Upper lobe of right lung (tissue), 1 donor: ENCODE measurements at regions of chr3 and their contacts with region 1.

Region 1: GRCh38 chr3:4629095-4630007 is 136.2 kb downstream of the ITPR1 start:
- DNase-seq: no peak
- ATAC-seq: no peak
- H3K4me3 ChIP-seq: no peak overlapping the region
- H3K27ac ChIP-seq: no peak overlapping the region
- H3K4me1 ChIP-seq: no peaks in the 10 kb centered on the region
- H3K27me3 ChIP-seq: no peaks in the 10 kb centered on the region
- CTCF ChIP-seq: no peak

Region 2: GRCh38 chr3:4355401-4356219 is 273.7 kb before region 1 on chr3:
- intact Hi-C with region 1: loop called (anchors 5 kb)
- DNase-seq: no peak
- ATAC-seq: no peak
- H3K4me3 ChIP-seq: no peak overlapping the region
- H3K27ac ChIP-seq: no peak overlapping the region
- H3K4me1 ChIP-seq: peaks cover 15% of the 10 kb centered on the region
- H3K27me3 ChIP-seq: no peaks in the 10 kb centered on the region
- CTCF ChIP-seq: no peak

Region 3: DNA sequence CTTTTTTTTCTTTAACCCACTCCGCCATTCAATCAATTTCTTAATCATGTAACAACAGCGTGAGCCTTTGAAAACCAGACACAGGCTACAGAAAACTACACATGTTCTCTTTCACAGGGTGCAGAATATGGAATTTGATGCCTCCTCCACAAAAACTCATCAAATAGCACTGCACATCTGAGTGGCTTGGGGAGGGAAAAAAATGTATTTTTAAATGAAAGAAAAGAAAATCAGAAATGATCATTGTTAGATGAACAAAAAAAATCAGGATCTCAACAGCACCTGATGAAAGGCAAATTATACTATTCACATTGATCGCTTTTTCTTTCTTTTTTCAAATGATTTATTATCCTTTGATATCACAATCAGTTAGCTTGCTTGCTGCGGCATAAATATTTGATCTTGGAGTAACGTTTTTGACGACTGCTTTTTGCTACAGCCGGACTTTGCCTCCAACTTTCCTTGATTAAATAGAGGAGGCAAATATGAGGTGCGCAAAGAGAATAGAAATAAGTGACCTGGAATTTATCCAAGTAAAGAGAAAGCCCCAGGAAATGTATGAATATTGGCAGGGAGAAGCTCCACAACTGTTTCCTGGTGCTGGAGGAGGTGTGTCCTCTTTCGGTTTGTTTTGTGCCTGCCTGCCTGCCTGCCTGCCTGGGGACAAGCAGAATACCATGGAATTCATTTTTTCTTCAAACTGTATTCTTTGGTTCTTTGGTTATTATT is 621.3 kb after region 1 on chr3:
- intact Hi-C with region 1: no loop called
- DNase-seq: no peak
- ATAC-seq: peak; percentile 65
- H3K4me3 ChIP-seq: peak overlapping the region; percentile 28
- H3K27ac ChIP-seq: no peak overlapping the region
- H3K4me1 ChIP-seq: no peaks in the 10 kb centered on the region
- H3K27me3 ChIP-seq: no peaks in the 10 kb centered on the region
- CTCF ChIP-seq: no peak